ENCODE measurements at regions of chr10 and their contacts with region 1.

Region 1: DNA sequence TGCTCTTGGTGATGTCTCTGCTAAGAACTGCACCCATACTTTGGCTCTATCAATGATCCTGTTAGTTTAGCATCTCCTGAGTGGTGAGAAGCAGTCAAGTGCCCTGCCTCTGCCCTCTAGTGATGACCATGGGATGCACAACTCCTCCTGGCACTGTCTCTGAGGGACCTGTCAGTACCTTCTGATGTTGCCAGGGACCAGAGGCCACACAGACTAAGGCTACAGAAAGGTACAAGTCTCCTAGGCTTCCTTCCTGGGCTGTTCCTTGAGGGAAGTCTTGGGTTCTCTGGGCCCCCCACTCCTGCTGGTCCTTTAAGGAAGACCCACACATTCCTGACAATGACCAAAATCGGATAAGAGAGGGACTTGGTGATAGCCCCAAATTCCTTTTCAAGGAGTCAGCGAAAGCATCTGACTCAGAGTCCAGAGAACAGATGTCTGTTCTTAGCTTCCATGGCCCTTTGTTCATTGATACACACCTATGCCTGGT is 15.3 kb downstream of the NKX2-3 start:
- H3K4me3 Mint-ChIP-seq: no peak overlapping the region
- H3K27ac Mint-ChIP-seq: no peak overlapping the region
- H3K4me1 Mint-ChIP-seq: peaks cover 5% of the 10 kb centered on the region
- H3K27me3 Mint-ChIP-seq: peaks cover 43% of the 10 kb centered on the region

Region 2: GRCh38 chr10:99394761-99395386 is 153.2 kb before region 1 on chr10:
- intact Hi-C with region 1: loop called (anchors 2 kb)
- H3K4me3 Mint-ChIP-seq: no peak overlapping the region
- H3K27ac Mint-ChIP-seq: no peak overlapping the region
- H3K4me1 Mint-ChIP-seq: peaks cover 12% of the 10 kb centered on the region
- H3K27me3 Mint-ChIP-seq: peaks cover 6% of the 10 kb centered on the region

Region 3: GRCh38 chr10:99435986-99436638 is 112.0 kb before region 1 on chr10:
- intact Hi-C with region 1: loop called (anchors 5 kb)
- H3K4me3 Mint-ChIP-seq: no peak overlapping the region
- H3K27ac Mint-ChIP-seq: no peak overlapping the region
- H3K4me1 Mint-ChIP-seq: peaks cover 24% of the 10 kb centered on the region
- H3K27me3 Mint-ChIP-seq: no peaks in the 10 kb centered on the region